ENCODE measurements at regions of chr19 and their contacts with region 1.

Region 1: GRCh38 chr19:19538061-19538784 is at the start of gene CILP2:
- DNase-seq: peak in 1 of 2 experiments; percentile 39
- H3K4me3 ChIP-seq: no peak within 1 kb of the TSS
- H3K4me1 ChIP-seq: no peaks in the 10 kb centered on the region
- H3K27me3 ChIP-seq: no peaks in the 10 kb centered on the region

Region 2: DNA sequence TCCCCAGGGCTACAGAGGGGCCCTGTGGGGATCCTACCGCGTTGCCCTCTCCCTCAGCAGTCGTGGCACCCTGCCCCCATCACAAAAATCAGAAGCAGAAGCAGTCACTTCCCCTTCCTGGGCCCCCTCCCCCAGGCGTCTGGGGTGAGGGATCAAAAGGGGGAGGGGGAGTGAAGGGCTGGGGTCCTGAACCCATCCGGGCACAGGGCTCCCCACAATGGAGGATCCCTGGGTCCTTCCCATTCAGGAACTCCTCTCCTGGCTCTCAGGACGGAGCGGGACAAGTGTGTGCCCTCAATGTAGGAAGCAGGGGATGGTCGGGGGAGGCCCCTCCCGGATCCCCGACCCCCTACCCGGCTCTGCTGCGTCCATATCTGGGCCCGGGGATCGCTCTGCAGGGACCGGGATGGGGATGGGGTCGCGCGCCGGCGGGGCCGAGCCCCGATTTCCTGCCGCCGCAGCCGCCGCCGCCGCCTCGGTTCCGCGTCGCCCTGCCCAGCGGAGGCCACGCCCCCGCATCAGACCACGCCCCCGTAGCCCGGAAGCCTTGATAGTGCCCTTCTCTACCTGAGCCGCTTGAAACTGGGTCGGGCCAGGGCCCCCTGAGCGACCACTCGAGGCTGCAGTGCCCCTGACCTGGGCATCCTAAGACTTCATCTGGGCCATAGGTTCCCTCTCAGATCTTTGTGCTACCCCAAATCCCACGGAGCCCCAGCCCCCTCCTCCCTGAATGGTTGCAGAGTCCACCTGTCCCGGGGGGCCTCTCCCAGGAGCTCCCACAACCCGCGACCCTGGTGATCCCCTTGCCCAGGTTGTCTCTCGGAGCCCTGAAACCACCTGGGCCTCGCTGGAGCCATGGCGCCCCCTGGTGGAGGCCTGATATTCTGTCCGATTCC is 105.2 kb after region 1 on chr19 and contains the start of gene GMIP:
- in situ Hi-C with region 1: loop called (anchors 5 kb)
- DNase-seq: peak; percentile 37 to 89
- H3K4me3 ChIP-seq: peak within 1 kb of the TSS; percentile 67
- H3K4me1 ChIP-seq: no peaks in the 10 kb centered on the region; the same call in 1 of the 2 replicates
- H3K27me3 ChIP-seq: no peaks in the 10 kb centered on the region

Measured in HAP-1 (cell line).